ENCODE measurements at regions of chr6 and their contacts with region 1.

Region 1: DNA sequence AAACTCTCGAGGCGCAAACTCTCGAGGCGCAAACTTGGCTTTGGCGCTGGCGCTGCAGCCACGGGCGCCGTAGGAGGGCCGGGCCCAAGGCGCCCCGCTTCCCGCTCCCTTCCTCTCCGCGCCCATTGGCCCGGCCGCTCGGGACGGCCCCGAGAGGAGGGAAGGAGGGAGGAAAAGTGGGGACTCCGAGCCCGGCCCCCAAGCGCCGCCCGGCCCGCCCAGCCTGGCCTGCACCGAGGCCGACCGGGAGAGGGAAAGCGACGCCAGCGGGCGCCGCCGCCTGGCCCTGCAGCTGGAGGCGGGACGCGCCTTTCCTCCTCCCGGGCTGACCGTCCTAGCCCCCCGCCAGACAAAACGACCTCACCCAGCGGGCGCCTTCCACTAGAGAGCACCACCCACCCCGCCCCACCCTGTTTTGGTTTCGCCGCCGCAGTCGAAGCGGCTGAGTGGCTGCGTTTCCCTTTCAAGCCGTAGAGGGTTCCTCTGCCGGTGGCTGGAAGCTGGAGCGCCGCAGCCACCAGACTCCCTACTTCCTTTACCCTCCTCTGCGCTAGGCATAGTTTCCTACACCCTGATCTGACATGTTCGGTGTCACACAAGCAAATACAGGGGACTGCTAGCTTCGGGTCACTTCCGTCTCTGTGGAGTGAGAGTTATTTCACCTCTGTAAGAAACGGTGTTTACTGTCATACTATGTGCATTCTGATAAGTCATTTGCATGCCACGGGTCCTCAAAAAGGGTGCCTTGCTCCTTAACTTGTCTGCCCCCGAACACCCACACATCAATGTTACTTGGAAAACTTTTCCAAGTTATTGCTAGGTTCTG is at the start of gene MBOAT1:
- DNase-seq: peak; percentile 38 to 85 (median 54)
- ATAC-seq: peak; percentile 82
- H3K4me3 ChIP-seq: peak within 1 kb of the TSS; percentile 73
- H3K4me3 Mint-ChIP-seq: peak within 1 kb of the TSS; percentile 82 to 99 (median 96)
- H3K27ac ChIP-seq: peak within 1 kb of the TSS; percentile 62
- H3K27ac Mint-ChIP-seq: peak within 1 kb of the TSS; percentile 56 to 94 (median 91)
- H3K4me1 ChIP-seq: peaks cover 11 to 20% of the 10 kb centered on the region in 2 donors
- H3K4me1 Mint-ChIP-seq: peaks cover 18 to 41% (median 27%) of the 10 kb centered on the region in 7 donors
- H3K27me3 ChIP-seq: no peaks in the 10 kb centered on the region
- H3K27me3 Mint-ChIP-seq: peaks cover 0 to 5% (median 0%) of the 10 kb centered on the region in 5 donors
- total RNA-seq, gene MBOAT1: 6.2 to 24.7 (median 10.0) TPM

Region 2: DNA sequence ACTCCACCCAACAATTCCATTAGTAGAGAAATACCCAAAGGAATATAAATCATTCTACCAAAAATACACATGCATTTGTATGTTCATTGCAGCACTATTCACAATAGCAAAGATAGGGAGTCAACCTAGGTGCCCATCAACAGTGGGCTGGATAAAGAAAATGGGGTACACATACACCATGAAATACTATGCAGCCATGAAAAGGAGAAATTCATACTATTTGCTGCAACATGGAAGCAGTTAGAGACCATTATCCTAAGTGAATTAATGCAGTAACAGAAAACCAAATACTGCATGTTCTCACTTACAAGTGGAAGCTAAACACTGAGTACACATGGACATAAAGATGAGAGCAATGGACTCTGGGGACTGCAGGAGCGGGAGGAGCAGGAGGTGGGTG is 72.1 kb after region 1 on chr6:
- CTCF ChIA-PET with region 1: no interaction called
- POLR2A ChIA-PET with region 1: no interaction called
- intact Hi-C with region 1: no loop called
- DNase-seq: no peak
- ATAC-seq: no peak
- H3K4me3 ChIP-seq: no peak overlapping the region
- H3K4me3 Mint-ChIP-seq: no peak overlapping the region
- H3K27ac ChIP-seq: no peak overlapping the region
- H3K27ac Mint-ChIP-seq: no peak overlapping the region
- H3K4me1 ChIP-seq: no peaks in the 10 kb centered on the region
- H3K4me1 Mint-ChIP-seq: no peaks in the 10 kb centered on the region
- H3K27me3 ChIP-seq: peaks cover 0 to 6% of the 10 kb centered on the region in 2 donors
- H3K27me3 Mint-ChIP-seq: peaks cover 12 to 50% (median 27%) of the 10 kb centered on the region in 5 donors

Region 3: GRCh38 chr6:20534295-20535262 is 322.0 kb after region 1 on chr6 and contains the start of gene CDKAL1:
- CTCF ChIA-PET with region 1: interaction called, 3 read pairs
- POLR2A ChIA-PET with region 1: no interaction called
- intact Hi-C with region 1: loop called (anchors 1 to 2 kb)
- DNase-seq: peak; percentile 69 to 89 (median 86)
- ATAC-seq: peak; percentile 95
- H3K4me3 ChIP-seq: peak within 1 kb of the TSS; percentile 92
- H3K4me3 Mint-ChIP-seq: peak within 1 kb of the TSS; percentile 88 to 100 (median 97)
- H3K27ac ChIP-seq: peak within 1 kb of the TSS; percentile 89
- H3K27ac Mint-ChIP-seq: peak within 1 kb of the TSS; percentile 94 to 100 (median 99)
- H3K4me1 ChIP-seq: peaks cover 0 to 11% of the 10 kb centered on the region in 2 donors
- H3K4me1 Mint-ChIP-seq: peaks cover 22 to 53% (median 41%) of the 10 kb centered on the region in 7 donors
- H3K27me3 ChIP-seq: no peaks in the 10 kb centered on the region
- H3K27me3 Mint-ChIP-seq: peaks cover 0 to 4% (median 0%) of the 10 kb centered on the region in 5 donors
- total RNA-seq, gene CDKAL1: 23.6 to 30.3 (median 25.0) TPM

Measured in naive thymus-derived CD4-positive, alpha-beta T cell (primary cell).